Activated T-helper 1 cell treated with anti-CD3 and anti-CD28 coated beads, Interleukin-12 subunit alpha, Interleukin-12 subunit beta, Interleukin-2, Interleukin-4 antibody, amounts not matched to agents 30 ng/mL and 10 ng/mL and 1 ng/mL, durations not matched to agents 14 hours and 24 hours and 36 hours (primary cell): ENCODE measurements at regions of chr12 and their contacts with region 1.

Region 1: DNA sequence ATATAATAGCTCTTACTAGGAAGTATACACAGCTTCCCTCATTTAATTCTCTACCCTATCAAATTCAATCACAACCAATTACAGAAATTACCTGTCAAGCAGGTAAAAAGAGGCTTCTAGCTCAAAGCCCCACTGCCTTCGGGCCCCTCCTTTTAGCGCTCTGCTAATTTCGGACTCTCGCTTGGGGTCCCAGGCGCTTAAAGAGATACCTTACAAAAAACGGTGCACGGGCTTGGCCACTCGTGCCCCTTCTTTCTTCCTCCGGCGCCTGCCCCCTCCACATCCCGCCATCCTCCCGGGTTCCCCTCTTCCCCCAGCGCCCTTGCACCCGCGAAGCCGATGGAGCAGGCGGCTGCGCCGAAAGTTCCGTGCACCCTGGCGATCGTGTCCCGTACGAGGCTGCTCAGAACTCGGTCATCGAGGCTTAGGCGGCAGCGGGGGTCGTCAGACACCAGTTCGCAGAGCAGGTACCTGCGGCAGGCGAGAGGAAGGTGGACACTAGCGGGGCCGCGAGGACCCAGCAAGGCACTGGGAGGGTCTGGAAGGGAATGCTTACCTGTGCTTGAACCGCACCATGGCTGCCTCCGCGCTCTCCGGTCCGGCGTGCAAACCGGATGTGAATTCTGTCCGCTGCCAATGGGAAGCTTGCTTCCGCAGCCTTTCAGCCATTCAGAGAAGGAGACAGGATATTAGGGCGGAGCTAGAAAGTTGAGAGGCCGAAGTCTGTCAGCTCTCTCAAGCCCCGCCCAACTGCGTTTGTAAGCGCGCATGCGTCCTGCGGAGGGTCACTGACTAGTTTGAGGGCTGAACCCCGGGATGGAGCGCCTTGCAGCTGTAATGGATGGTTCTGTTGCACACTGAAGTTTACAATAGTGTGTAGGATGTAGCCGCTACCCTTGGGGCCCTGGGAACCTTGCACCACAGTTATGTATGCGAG is at the start of gene POP5:
- DNase-seq: peak; percentile 95
- H3K4me3 Mint-ChIP-seq: peak within 1 kb of the TSS; percentile 98
- H3K27ac Mint-ChIP-seq: peak within 1 kb of the TSS; percentile 89
- H3K4me1 Mint-ChIP-seq: peaks cover 36% of the 10 kb centered on the region
- H3K27me3 Mint-ChIP-seq: peaks cover 18% of the 10 kb centered on the region
- total RNA-seq, gene POP5: 83.3 and 85.0 TPM in 2 replicates

Region 2: GRCh38 chr12:120437754-120438494 is 143.1 kb before region 1 on chr12 and contains the start of gene COX6A1:
- intact Hi-C with region 1: loop called (anchors 1 kb)
- DNase-seq: peak; percentile 97
- H3K4me3 Mint-ChIP-seq: peak within 1 kb of the TSS; percentile 100
- H3K27ac Mint-ChIP-seq: peak within 1 kb of the TSS; percentile 98
- H3K4me1 Mint-ChIP-seq: peaks cover 31% of the 10 kb centered on the region
- H3K27me3 Mint-ChIP-seq: no peaks in the 10 kb centered on the region
- total RNA-seq, gene COX6A1: 352 and 365 TPM in 2 replicates

Region 3: GRCh38 chr12:120640840-120641833 is 60.1 kb after region 1 on chr12:
- intact Hi-C with region 1: loop called (anchors 2 kb)
- DNase-seq: peak; percentile 49
- H3K4me3 Mint-ChIP-seq: peak overlapping the region; percentile 66
- H3K27ac Mint-ChIP-seq: no peak overlapping the region
- H3K4me1 Mint-ChIP-seq: peaks cover 10% of the 10 kb centered on the region
- H3K27me3 Mint-ChIP-seq: peaks cover 45% of the 10 kb centered on the region

Region 4: DNA sequence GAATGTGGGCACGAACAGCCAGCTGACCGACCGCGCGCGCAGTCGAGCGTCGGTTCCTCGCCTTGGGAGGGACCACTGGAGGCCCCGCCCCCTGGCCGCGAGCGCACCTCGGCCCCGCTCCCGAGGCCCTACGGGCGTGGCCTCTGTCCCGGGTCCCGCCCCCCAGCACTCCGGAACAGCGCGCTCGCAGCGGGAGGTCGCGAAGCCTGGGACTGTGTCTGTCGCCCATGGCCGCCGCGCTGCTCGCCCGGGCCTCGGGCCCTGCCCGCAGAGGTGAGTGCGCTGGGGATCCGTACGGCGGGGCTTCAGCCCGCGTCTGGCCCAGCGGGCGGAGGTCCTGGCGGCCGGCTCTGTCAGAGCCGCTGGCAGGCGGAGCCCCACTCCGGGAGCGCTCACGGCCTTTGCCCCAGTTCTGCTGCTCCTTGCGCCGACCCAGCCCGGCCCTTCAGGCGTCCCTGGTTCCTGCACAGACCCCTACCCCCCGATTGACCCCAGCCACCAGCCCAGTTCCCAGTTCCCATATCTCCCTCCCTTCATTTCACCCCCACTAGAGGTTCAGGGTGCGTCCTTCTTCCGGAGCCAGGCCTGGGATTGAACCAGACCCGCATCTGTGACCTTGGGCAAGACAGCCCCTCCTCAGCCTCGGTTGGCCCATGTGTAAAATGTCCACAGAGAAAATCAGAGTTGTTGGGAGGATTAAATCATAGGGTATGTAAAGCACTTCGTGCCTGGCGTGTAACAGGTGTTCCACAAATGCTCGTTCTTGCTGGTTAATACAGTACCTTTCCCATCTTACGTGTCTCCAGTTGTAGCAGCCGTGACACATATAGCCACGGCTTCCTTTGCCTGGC is 144.8 kb after region 1 on chr12 and contains the start of gene ACADS:
- intact Hi-C with region 1: loop called (anchors 1 kb)
- DNase-seq: peak; percentile 89
- H3K4me3 Mint-ChIP-seq: peak within 1 kb of the TSS; percentile 94
- H3K27ac Mint-ChIP-seq: peak within 1 kb of the TSS; percentile 87
- H3K4me1 Mint-ChIP-seq: peaks cover 22% of the 10 kb centered on the region
- H3K27me3 Mint-ChIP-seq: no peaks in the 10 kb centered on the region
- total RNA-seq, gene ACADS: 10.8 and 11.1 TPM in 2 replicates

Region 5: DNA sequence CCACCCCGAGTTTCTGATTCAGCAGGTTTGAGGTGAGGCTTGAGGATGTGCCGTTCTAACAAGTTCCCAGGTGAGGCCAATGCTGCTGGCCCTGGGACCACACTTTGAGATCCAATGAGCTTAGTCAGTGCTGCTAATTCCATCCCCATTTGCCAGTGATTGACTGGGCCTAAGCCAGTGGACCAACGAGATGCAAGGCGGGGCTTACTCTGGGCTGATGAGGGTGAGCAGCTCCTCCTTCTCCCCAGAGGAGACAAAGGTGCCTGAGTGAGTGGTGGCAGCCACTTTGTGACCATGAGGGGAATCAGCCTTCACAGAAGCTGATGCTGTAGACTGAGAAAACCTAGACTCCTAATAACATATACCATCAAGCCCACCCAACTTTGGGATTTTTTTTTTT is 374.2 kb after region 1 on chr12:
- intact Hi-C with region 1: no loop called
- DNase-seq: no peak
- H3K4me3 Mint-ChIP-seq: no peak overlapping the region
- H3K27ac Mint-ChIP-seq: no peak overlapping the region
- H3K4me1 Mint-ChIP-seq: peaks cover 12% of the 10 kb centered on the region
- H3K27me3 Mint-ChIP-seq: peaks cover 4% of the 10 kb centered on the region

Region 6: DNA sequence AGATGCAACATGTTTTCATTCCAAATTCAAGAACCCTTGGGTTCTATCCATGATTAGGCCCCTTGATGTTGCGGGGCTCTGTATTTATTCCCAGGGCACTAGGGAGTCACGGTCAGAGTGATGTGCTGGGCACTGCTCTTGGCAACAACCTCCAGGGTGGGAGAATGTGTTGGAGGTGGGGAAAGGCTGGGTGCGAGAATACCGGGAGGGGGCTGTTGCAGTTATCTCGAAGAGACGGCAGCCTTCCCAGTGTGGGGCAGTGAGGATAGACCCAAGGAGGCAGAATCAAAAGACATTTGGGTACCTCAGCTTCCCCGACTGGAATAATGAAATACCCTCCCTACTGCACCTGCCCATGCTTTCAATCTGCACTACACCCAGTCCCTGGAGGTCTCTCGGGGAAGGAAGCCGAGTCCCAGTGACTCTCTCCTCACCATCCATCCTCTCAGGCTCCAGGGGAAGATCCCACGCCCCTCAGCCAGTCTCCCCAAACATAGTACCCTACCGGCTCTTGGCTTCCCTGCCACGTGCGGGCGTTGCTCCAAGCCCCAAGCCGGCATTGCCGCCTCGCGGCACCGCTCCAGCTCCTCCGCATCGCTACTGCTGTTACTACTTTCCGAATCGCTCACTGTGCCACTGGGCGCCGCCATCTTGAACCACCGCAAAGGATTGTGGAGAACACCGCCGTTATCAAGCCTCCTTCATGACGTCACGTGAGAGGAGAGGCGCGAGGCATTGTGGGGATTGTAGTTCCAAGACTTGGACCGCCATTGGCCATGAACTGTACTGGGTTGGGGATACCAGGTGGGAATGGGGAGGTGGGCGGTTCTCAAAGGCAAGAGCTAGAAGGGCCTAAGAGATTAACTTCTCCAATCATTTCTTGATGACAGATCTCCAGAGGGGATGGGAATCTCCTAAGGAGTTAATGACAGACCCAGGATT is 435.0 kb after region 1 on chr12 and contains the start of gene C12orf43:
- intact Hi-C with region 1: loop called (anchors 5 kb)
- DNase-seq: peak; percentile 90
- H3K4me3 Mint-ChIP-seq: peak within 1 kb of the TSS; percentile 100
- H3K27ac Mint-ChIP-seq: peak within 1 kb of the TSS; percentile 99
- H3K4me1 Mint-ChIP-seq: peaks cover 28% of the 10 kb centered on the region
- H3K27me3 Mint-ChIP-seq: no peaks in the 10 kb centered on the region
- total RNA-seq, gene C12orf43: 34.6 and 35.3 TPM in 2 replicates

Region 7: DNA sequence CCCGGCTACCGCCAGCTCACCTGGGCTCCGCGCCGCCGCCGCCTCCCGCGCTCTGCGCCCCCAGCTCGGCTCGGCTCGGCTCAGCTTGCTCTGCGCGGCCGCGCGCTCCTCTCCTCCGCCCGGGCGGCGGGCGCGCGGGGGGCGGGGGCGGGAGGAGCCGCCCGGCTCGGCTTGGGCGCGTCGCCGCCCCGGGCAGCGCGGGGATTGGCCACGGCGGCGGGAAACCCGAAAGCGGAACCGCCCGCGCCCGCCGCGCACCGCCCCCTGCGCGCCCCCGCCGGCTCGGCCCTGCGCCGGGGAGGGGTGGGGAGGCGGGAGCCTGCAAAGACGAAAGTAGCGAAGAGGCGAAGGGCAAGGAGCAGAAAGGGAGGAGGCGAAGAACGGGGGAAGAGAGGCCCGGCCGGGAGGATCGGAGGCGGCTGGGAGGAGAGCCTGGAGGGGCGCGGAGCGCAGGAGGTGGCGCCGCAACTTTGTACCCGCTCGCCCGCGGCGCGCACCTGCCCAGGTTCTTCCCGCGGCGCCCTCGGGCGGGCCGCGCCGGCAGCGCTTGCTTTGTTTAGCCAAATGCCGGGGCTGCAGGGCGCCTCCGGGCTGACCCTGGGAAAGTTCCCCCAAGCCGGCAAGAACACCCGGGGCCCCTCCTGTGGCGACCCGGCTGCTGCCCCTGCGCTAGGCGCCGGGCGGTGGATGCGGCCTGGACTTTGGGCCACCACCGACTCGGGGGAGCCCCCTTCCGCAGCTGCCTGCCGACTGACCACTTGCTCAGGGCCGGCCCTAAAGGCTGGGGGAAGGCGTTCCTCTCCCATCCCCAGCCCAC is 715.8 kb after region 1 on chr12 and contains the start of gene CAMKK2:
- intact Hi-C with region 1: loop called (anchors 5 kb)
- DNase-seq: peak; percentile 91
- H3K4me3 Mint-ChIP-seq: peak within 1 kb of the TSS; percentile 94
- H3K27ac Mint-ChIP-seq: peak within 1 kb of the TSS; percentile 88
- H3K4me1 Mint-ChIP-seq: peaks cover 35% of the 10 kb centered on the region
- H3K27me3 Mint-ChIP-seq: no peaks in the 10 kb centered on the region
- total RNA-seq, gene CAMKK2: 38.1 and 41.0 TPM in 2 replicates